ENCODE measurements at regions of chr17 and their contacts with region 1.

Region 1: DNA sequence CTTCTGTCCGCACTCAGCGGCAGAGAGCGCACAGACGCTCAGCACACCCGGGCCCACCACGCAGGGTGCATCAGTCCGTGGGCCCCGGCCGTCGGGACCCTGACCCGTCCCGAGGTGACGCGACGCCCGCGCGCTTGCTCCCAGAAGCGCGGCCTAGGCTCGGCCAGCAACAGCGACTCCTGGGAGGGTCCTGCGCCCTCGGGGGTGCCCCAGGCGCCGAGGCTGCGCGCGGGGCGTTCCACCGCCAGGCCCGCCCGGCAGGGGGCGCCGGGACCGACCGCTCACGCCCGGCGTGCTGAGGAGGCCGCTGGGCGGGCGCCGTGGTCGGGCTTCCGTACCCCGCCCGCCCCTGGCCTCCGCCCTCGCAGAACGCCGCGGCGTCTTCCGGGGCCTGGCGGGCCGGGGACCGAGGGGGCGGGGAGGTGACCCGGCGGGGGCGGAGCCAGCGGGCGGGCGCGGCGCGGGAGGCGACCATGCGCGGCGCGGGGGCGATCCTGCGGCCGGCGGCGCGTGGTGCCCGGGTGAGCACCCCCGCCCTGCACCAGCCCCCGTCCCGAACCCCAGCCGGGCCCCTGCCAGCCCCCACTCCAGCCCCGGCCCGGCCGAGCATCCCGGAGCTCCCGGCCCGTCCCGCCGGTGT is at the start of gene CISD3:
- DNase-seq: peak; percentile 89
- ATAC-seq: peak; percentile 86
- H3K4me3 Mint-ChIP-seq: peak within 1 kb of the TSS; percentile 94
- H3K27ac Mint-ChIP-seq: peak within 1 kb of the TSS; percentile 95
- H3K4me1 Mint-ChIP-seq: peaks cover 70% of the 10 kb centered on the region
- H3K27me3 Mint-ChIP-seq: no peaks in the 10 kb centered on the region
- total RNA-seq, gene CISD3: 51.3 to 54.3 TPM

Region 2: GRCh38 chr17:38454516-38454915 is 275.5 kb before region 1 on chr17:
- CTCF ChIA-PET with region 1: no interaction called
- DNase-seq: no peak
- ATAC-seq: no peak
- H3K4me3 Mint-ChIP-seq: no peak overlapping the region
- H3K27ac Mint-ChIP-seq: no peak overlapping the region
- H3K4me1 Mint-ChIP-seq: peaks cover 3% of the 10 kb centered on the region
- H3K27me3 Mint-ChIP-seq: peaks cover 42% of the 10 kb centered on the region

Region 3: GRCh38 chr17:38628441-38628840 is 101.6 kb before region 1 on chr17:
- CTCF ChIA-PET with region 1: no interaction called
- DNase-seq: no peak
- ATAC-seq: no peak
- H3K4me3 Mint-ChIP-seq: no peak overlapping the region
- H3K27ac Mint-ChIP-seq: no peak overlapping the region
- H3K4me1 Mint-ChIP-seq: peaks cover 11% of the 10 kb centered on the region
- H3K27me3 Mint-ChIP-seq: peaks cover 29% of the 10 kb centered on the region

Region 4: GRCh38 chr17:38702166-38702899 is 27.7 kb before region 1 on chr17:
- CTCF ChIA-PET with region 1: interaction called, 33 read pairs
- DNase-seq: peak; percentile 89
- ATAC-seq: peak; percentile 54
- H3K4me3 Mint-ChIP-seq: peak overlapping the region; percentile 90
- H3K27ac Mint-ChIP-seq: peak overlapping the region; percentile 99
- H3K4me1 Mint-ChIP-seq: peaks cover 40% of the 10 kb centered on the region
- H3K27me3 Mint-ChIP-seq: no peaks in the 10 kb centered on the region

Region 5: DNA sequence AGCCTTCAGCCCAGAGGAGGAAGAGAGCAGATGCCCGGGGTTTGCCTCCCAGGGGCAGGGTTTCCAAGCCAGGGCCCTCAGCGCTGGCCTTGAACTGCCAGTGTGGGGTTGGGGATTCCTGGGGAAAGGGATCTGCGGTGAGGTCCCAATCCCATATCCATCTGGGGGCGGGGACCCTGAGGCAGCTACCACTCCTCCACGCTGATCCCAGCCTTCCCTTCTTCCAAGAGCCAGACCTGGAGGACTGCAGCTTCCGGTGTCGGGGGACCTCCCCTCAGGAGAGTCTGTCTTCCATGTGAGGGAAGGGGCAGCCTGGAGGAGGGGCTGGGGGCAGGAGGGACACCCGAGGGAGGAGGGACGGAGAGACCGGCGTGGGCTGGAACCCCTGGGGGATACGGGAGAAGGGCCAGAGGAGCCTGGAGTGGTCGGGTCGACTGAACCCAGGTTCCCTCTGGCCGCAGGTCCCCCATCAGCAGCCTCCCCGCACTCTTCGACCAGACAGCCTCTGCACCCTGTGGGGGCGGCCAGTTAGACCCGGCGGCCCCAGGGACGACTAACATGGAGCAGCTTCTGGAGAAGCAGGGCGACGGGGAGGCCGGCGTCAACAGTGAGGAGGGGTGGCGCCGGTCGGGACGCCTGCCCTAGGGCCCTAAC is 10.6 kb before region 1 on chr17:
- CTCF ChIA-PET with region 1: interaction called, 17 read pairs
- DNase-seq: no peak
- ATAC-seq: no peak
- H3K4me3 Mint-ChIP-seq: no peak overlapping the region
- H3K27ac Mint-ChIP-seq: no peak overlapping the region
- H3K4me1 Mint-ChIP-seq: peaks cover 13% of the 10 kb centered on the region
- H3K27me3 Mint-ChIP-seq: no peaks in the 10 kb centered on the region

Region 6: GRCh38 chr17:38752119-38752929 is 22.3 kb after region 1 on chr17 and contains the start of gene PSMB3:
- CTCF ChIA-PET with region 1: interaction called, 28 read pairs
- DNase-seq: peak; percentile 99
- ATAC-seq: peak; percentile 89
- H3K4me3 Mint-ChIP-seq: peak within 1 kb of the TSS; percentile 91
- H3K27ac Mint-ChIP-seq: peak within 1 kb of the TSS; percentile 93
- H3K4me1 Mint-ChIP-seq: peaks cover 41% of the 10 kb centered on the region
- H3K27me3 Mint-ChIP-seq: peaks cover 32% of the 10 kb centered on the region
- total RNA-seq, gene PSMB3: 246 to 303 TPM